ENCODE measurements at regions of chr9 and their contacts with region 1.

Region 1: DNA sequence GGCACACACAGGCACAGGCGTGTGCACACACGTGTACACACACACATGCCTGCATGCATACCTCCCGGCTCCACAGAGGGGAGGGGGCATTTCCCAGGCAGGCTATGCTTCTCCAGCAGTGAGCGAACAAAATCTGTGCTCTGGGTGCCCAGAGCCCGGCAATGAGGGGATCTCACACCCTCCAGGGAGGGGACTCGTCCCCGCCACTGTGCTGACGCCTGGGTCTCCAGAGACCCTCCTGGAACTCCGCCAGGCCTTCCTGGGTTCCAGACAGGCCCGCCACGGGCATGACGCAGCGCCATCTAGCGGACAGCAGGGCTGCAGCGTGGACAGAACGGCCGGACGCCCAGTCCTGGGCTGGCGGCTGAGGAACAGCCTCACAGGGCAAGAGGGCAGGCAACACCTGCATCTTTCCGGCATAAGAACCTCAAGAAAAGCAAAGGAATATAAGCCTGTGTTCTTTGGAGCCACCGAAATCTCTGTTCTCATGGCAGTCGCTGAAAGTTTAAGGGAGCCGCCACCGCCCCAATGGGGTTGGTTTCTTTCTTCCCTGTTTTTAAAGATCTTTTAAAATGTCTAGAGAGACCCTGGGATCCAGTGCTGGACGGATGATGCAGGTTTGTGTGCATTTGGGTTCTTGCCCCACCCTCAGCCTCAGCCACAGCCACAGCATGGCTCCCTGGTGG is 135.6 kb upstream of the PPP1R26 start:
- DNase-seq: peak; percentile 35 to 60
- ATAC-seq: peak in 2 of 3 donors; percentile 43 to 70
- H3K4me3 ChIP-seq: no peak overlapping the region
- H3K4me3 Mint-ChIP-seq: no peak overlapping the region
- H3K27ac ChIP-seq: no peak overlapping the region
- H3K27ac Mint-ChIP-seq: no peak overlapping the region
- H3K4me1 ChIP-seq: no peaks in the 10 kb centered on the region
- H3K4me1 Mint-ChIP-seq: no peaks in the 10 kb centered on the region
- H3K27me3 ChIP-seq: no peaks in the 10 kb centered on the region
- H3K27me3 Mint-ChIP-seq: no peaks in the 10 kb centered on the region
- CTCF ChIP-seq: peak; percentile 76

Region 2: GRCh38 chr9:135098400-135099105 is 245.4 kb before region 1 on chr9:
- intact Hi-C with region 1: loop called (anchors 10 kb)
- DNase-seq: no peak
- ATAC-seq: no peak
- H3K4me3 ChIP-seq: no peak overlapping the region
- H3K4me3 Mint-ChIP-seq: no peak overlapping the region
- H3K27ac ChIP-seq: no peak overlapping the region
- H3K27ac Mint-ChIP-seq: no peak overlapping the region
- H3K4me1 ChIP-seq: no peaks in the 10 kb centered on the region
- H3K4me1 Mint-ChIP-seq: no peaks in the 10 kb centered on the region
- H3K27me3 ChIP-seq: no peaks in the 10 kb centered on the region
- H3K27me3 Mint-ChIP-seq: peaks cover 22 to 32% of the 10 kb centered on the region in 2 donors
- CTCF ChIP-seq: no peak

Region 3: DNA sequence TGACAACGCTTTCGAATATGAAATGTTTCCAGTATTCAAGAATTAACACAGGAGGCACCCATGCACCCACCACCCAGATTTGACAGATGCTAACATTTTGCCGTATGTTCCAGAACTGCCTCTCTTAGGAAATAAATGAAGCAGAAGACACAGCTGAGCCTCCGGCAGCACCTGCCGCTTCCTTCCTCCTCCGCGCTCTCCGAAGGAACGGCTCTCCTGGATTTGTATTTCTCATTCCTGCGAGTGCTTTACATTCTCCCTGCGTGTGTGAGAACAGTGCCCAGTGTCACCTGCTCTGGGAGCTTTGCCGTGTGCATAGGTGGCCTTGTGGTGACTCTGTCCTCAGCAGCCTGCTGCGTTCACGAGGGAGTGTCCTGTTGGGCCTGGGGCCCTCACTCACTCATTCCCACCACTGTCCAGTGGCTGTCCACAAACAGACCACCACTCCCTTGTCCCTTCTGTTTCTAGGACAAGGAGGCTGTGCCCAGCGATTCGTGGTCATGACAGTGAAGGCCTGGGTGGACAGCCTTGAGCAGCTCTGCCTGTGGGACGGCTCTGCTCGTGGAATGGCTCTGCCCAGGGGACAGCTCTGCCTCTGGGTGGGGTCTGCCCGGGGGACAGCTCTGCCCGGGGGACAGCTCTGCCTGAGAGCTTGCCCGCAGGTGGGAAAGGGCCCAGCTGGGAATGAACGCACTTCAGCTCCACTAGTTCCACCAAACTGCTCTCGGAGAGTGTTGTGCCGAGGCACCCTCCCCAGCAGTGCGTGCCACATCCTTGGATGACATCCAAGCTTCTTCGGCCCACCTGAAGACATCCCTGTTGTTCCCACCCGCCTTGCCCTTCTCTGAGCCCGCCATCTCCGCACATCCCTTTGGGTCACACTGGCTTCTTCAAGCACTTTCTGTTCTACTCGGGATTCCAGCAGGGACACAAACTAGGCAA is 34.9 kb before region 1 on chr9:
- intact Hi-C with region 1: no loop called
- DNase-seq: no peak
- ATAC-seq: no peak
- H3K4me3 ChIP-seq: no peak overlapping the region
- H3K4me3 Mint-ChIP-seq: no peak overlapping the region
- H3K27ac ChIP-seq: no peak overlapping the region
- H3K27ac Mint-ChIP-seq: no peak overlapping the region
- H3K4me1 ChIP-seq: no peaks in the 10 kb centered on the region
- H3K4me1 Mint-ChIP-seq: no peaks in the 10 kb centered on the region
- H3K27me3 ChIP-seq: peaks cover 2% of the 10 kb centered on the region
- H3K27me3 Mint-ChIP-seq: peaks cover 14 to 21% of the 10 kb centered on the region in 2 donors
- CTCF ChIP-seq: no peak

Measured in natural killer cell (primary cell).